HAP-1 (cell line): ENCODE measurements at regions of chr13 and their contacts with region 1.

Region 1: DNA sequence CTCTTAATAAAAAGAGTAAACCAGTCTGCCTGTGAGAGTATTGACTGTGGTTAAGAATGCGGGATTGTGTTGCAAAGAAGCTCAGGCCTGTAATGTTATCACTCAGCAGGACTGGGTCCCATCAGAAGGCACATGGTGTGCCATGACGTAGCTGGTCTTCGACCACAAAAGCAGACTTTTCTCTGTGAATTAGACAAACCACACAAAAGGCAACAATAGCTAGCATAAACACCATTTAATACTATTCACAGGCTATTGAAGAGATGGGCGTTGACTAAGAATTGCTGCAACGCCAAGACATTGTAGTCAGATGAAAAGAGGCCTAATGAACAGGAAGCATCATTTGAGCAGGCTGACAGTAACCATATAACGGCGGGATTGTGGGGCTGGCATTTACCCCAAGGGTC is 235.6 kb upstream of the SOX21 start:
- DNase-seq: peak; percentile 87 to 100
- H3K4me3 ChIP-seq: no peak overlapping the region
- H3K4me1 ChIP-seq: peaks cover 25% of the 10 kb centered on the region
- H3K27me3 ChIP-seq: 0 out of 2 replicates have a peak, but pooled peaks cover 2% of the 10 kb centered on the region

Region 2: DNA sequence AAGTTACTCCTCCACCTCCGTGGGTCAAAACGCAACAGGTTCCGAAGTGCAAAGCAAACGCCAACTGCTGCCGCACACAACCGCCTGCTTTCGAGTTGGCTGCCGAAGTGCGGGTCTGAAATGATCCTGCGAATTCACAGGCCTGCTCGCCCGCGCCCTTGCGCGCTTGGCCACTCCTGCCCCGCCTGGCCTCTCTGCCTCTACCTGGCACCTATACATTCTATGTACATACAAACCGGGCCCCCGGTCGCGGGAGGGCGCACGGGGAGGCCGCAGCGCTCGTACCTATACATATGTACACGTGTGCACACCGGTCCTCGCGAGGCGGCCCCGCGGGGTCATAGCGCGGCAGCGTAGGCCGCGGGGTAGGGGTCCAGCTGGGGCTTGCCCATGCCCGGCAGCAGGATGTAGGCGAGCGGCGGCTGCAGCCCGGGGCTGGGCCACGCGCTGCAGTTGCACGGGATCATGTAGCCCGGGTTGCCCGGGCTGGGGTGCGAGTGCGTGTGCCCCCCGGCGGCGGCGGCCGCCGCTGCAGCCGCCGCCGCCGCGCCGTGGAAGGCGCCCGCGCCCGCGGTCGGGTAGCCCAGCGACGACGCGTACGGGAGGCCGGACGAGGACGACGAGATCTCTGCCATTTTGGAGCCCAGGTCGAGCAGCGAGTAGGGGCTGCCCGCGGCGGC is 236.9 kb before region 1 on chr13:
- in situ Hi-C with region 1: loop called (anchors 5 kb)
- DNase-seq: peak; percentile 51 to 72
- H3K4me3 ChIP-seq: peak overlapping the region; percentile 50
- H3K4me1 ChIP-seq: peaks cover 37% of the 10 kb centered on the region
- H3K27me3 ChIP-seq: no peaks in the 10 kb centered on the region